MCF 10A (cell line): ENCODE measurements at regions of chr1 and their contacts with region 1.

Region 1: GRCh38 chr1:145782166-145783099 is 41.5 kb downstream of the RNF115 start:
- DNase-seq: peak; percentile 95
- H3K4me3 Mint-ChIP-seq: peak overlapping the region; percentile 42
- H3K27ac Mint-ChIP-seq: peak overlapping the region; percentile 95
- H3K4me1 Mint-ChIP-seq: peaks cover 46% of the 10 kb centered on the region
- H3K27me3 Mint-ChIP-seq: no peaks in the 10 kb centered on the region
- CTCF ChIP-seq: no peak

Region 2: DNA sequence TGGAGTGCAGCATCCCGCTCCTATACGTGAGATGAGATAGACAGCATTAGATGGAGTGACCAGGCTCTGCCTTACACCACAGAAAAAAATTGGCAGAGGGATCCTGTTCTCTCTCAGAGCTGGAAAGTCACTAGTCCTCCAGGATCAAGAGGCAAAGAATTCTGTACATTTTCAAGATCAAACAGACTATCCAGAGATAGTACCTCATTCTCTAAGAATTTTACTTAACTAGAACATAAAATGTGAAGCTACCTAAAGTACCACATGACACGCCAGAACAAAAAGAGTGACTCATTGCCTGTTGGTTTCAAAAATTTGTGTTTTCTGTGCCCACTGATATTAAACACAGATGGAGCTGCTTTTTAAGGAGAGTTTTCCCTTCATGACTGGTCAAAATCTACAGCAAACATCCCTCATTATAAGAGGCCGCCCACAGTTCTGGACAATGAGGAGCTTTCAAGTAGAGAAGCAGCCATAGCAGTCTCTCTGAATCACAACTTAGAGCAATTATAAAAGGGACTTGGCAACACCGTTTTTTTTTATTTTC is 30.9 kb before region 1 on chr1:
- CTCF ChIA-PET with region 1: interaction called, 9 read pairs
- POLR2A ChIA-PET with region 1: interaction called, 10 read pairs
- intact Hi-C with region 1: no loop called
- DNase-seq: peak; percentile 50
- H3K4me3 Mint-ChIP-seq: no peak overlapping the region
- H3K27ac Mint-ChIP-seq: peak overlapping the region; percentile 87
- H3K4me1 Mint-ChIP-seq: peaks cover 14% of the 10 kb centered on the region
- H3K27me3 Mint-ChIP-seq: no peaks in the 10 kb centered on the region
- CTCF ChIP-seq: no peak

Region 3: DNA sequence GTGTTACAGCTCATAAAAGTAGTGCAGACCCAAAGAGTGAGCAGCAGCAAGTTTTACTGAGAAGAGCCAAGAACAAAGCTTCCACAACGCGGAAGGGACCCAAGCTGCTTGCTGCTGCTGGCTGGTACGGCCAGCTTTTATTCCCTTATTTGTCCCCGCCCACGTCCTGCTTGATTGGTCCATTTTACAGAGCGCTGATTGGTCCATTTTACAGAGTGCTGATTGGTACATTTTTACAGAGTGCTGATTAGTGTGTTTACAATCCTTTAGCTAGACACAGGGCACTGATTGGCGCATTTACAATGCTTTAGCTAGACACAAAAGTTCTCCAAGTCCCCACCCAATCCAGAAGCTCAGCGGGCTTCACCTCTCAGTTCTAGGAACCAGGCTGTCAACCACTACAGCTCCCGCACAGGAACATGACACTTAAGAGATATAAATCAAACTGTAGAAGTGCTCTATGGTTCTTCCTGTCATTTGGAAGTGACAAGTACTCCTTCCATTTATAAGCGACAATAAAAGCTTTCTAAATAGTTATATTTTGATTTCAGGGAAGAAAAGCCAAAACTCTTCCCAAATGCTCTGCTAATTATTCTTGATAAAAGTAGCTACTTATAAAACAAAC is 12.9 kb after region 1 on chr1:
- CTCF ChIA-PET with region 1: interaction called, 11 read pairs
- POLR2A ChIA-PET with region 1: interaction called, 24 read pairs
- intact Hi-C with region 1: no loop called
- DNase-seq: no peak
- H3K4me3 Mint-ChIP-seq: no peak overlapping the region
- H3K27ac Mint-ChIP-seq: no peak overlapping the region
- H3K4me1 Mint-ChIP-seq: peaks cover 4% of the 10 kb centered on the region
- H3K27me3 Mint-ChIP-seq: no peaks in the 10 kb centered on the region
- CTCF ChIP-seq: no peak

Region 4: DNA sequence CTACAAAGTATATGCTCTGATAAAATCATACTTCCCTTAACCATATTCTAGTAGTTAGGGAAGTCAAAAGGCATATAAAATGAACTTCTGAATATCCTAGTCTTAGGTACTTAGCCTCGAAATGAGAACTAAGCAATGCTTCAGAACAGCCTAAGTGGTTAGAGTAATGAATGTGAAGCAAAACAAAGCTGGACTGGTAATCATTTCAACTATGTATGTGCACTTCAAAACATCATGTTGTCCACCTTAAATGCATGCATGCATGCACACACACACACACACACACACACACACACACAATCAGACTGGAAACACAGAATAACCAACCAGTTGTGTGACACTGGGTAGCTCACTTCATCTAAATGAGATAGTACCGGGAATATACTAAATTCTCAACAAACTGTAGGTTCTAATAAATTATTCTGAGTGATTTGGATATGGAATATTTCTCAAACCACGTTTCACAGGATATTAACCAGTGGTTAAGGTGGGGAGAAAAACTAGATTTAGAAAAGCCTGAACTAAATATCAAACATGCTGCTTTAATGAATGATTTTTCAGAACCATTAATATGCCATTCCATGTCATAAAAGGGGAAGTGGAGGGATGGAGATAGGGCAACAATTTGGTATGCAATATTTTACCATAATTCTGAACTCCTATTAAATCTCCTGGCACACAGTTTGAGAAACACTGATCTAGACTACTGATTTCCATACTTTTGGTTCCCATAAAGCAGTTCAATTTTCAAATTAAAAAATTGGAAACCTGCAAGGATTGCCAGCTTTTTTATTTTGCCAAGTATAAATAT is 22.0 kb after region 1 on chr1:
- CTCF ChIA-PET with region 1: interaction called, 5 read pairs
- POLR2A ChIA-PET with region 1: interaction called, 24 read pairs
- intact Hi-C with region 1: no loop called
- DNase-seq: no peak
- H3K4me3 Mint-ChIP-seq: no peak overlapping the region
- H3K27ac Mint-ChIP-seq: no peak overlapping the region
- H3K4me1 Mint-ChIP-seq: peaks cover 41% of the 10 kb centered on the region
- H3K27me3 Mint-ChIP-seq: no peaks in the 10 kb centered on the region
- CTCF ChIP-seq: no peak

Region 5: GRCh38 chr1:145823565-145824498 is 41.4 kb after region 1 on chr1 and contains the starts of genes POLR3C and RNF115:
- CTCF ChIA-PET with region 1: interaction called, 4 read pairs
- POLR2A ChIA-PET with region 1: interaction called, 68 read pairs
- intact Hi-C with region 1: loop called (anchors 5 kb)
- DNase-seq: peak; percentile 95
- H3K4me3 Mint-ChIP-seq: peak within 1 kb of the TSS; percentile 90
- H3K27ac Mint-ChIP-seq: peak within 1 kb of the TSS; percentile 94
- H3K4me1 Mint-ChIP-seq: peaks cover 6% of the 10 kb centered on the region
- H3K27me3 Mint-ChIP-seq: no peaks in the 10 kb centered on the region
- CTCF ChIP-seq: no peak
- total RNA-seq, gene POLR3C: 67.9 and 96.8 TPM in 2 replicates
- total RNA-seq, gene RNF115: 16.8 and 19.5 TPM in 2 replicates